Pancreas (tissue), 10 donors: ENCODE measurements at regions of chr11 and their contacts with region 1.

Region 1: DNA sequence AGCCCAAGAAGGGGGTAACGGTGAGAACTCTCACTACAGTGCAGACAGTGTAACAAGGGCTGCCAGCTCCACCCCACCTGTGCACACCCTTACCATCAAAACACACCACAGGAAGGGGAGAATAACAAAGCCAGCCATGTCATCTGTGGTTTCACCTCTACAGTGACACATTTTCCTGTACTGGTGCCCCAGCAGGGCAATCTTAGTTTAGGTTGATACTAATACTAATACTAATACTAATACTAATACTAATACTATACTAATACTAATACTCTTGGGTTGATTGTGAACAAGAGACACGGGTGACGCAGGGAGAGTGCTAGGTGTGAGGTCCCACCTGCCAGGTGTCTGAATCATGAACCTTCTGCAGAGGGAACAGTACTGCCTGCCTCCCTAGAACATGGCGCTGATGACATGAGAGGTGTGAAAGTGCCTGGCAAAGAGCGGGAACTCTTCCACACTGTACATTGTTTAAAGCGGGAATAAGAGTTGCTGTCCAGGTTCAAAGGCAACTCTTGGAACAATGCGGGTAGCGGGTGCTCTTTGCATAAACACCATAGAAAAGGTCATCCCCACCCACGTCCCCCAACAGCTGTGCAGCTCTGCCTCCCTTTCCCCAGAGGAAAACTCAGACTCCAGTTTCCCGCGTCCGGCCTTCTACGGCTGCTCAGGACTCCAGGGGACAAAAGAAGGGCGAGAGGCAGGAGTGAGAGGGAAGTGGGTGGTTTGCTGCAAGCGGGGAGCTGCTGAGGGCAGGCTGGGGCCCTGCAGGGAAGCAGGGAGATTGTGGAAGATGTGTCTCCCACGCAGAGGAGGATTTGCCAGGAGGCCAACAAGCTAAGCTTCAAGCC is 25.0 kb upstream of the TMPRSS4 start:
- DNase-seq: no peak
- ATAC-seq: peak in 1 of 4 donors; percentile 18
- H3K4me3 ChIP-seq: no peak overlapping the region
- H3K27ac ChIP-seq: no peak overlapping the region
- H3K4me1 ChIP-seq: no peaks in the 10 kb centered on the region
- H3K27me3 ChIP-seq: no peaks in the 10 kb centered on the region
- CTCF ChIP-seq: no peak

Region 2: DNA sequence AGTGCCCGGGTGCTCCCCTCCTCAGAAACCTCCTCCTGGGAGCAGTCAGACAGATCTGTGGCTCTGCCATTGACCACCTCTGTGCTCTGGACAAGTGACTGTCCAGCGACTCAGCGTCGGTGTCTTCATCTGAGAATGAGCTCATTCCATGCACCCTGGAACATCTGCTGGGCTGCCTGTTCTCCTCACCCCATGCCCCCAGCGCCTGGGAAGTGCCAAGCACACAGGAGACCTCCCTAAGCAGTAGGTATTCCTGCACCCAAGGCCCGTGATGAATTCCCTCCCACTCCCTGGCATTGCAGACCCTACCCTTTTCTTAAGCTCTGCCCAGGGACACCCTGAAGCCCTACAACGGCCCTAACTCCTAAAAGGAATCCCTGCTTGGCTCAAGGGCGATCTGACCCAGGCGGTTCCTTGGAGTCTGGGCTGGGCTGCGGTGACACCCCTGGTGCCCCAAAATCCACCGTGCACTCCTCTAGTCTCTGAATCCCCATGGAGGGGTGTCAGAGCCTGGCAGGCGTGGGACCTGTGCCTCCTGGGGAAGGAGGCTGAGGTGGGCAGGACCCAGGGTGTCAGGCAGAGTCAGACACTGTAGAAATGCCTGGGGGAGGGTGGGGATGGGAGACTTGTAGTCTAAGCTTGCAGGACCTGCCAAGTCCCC is 632.2 kb before region 1 on chr11:
- intact Hi-C with region 1: loop called in 1 of 3 experiments (anchors 5 kb)
- DNase-seq: peak in 2 of 6 donors; percentile 1 to 42
- ATAC-seq: no peak
- H3K4me3 ChIP-seq: no peak overlapping the region
- H3K27ac ChIP-seq: no peak overlapping the region
- H3K4me1 ChIP-seq: no peaks in the 10 kb centered on the region
- H3K27me3 ChIP-seq: no peaks in the 10 kb centered on the region
- CTCF ChIP-seq: no peak

Region 3: GRCh38 chr11:117479372-117479771 is 572.5 kb before region 1 on chr11:
- intact Hi-C with region 1: no loop called
- DNase-seq: peak in 2 of 6 donors; percentile 22 to 49
- ATAC-seq: peak in 2 of 4 donors; percentile 41 to 53
- H3K4me3 ChIP-seq: no peak overlapping the region
- H3K27ac ChIP-seq: no peak overlapping the region
- H3K4me1 ChIP-seq: no peaks in the 10 kb centered on the region
- H3K27me3 ChIP-seq: no peaks in the 10 kb centered on the region
- CTCF ChIP-seq: no peak

Region 4: DNA sequence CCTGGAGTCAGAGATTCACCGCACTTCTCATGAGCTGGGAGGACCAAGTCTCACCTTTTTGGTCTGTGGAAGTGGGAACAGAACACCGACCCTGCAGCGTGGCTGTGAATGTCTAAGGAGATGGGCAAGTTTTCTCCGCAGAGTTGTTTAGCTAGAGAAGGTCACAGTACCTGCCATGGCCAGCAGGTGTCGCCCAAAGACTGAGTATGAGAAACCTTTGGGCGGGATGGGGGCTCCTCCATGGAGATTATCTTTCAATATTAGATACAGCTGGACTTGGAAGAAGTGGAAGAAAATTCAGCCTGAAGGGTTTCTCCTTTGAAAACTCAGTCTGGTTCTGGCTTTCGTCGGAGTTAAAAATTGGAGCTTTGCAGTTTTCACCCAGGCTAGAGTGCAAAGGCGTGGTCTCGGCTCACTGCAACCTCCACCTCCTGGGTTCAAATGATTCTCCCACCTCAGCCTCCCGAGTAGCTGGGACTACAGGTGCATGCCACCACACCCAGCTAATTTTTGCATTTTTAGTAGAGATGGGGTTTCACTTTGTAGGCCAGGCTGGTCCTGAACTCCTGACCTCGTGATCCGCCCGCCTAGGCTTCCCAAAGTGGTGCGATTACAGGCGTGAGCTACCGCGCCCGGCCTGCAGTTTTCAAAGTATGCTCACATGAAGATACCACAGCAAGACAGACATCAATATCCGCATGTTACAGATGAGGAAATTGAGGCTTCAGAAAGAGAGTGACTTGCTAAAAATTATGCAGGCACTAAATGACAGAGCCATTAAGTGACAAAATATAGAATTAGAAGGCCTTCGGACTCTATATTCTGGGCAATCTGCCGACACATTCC is 244.1 kb before region 1 on chr11:
- intact Hi-C with region 1: loop called in 2 of 3 experiments (anchors 5 kb)
- DNase-seq: peak in 3 of 6 donors; percentile 75 to 93 (median 80)
- ATAC-seq: peak; percentile 50 to 89 (median 80)
- H3K4me3 ChIP-seq: no peak overlapping the region
- H3K27ac ChIP-seq: no peak overlapping the region
- H3K4me1 ChIP-seq: no peaks in the 10 kb centered on the region
- H3K27me3 ChIP-seq: no peaks in the 10 kb centered on the region
- CTCF ChIP-seq: peak; percentile 78 to 87 (median 85)

Region 5: GRCh38 chr11:117843666-117844484 is 208.0 kb before region 1 on chr11:
- intact Hi-C with region 1: loop called in 1 of 3 experiments (anchors 10 kb)
- DNase-seq: peak; percentile 62 to 96 (median 82)
- ATAC-seq: peak; percentile 78 to 91 (median 90)
- H3K4me3 ChIP-seq: no peak overlapping the region
- H3K27ac ChIP-seq: no peak overlapping the region
- H3K4me1 ChIP-seq: no peaks in the 10 kb centered on the region
- H3K27me3 ChIP-seq: no peaks in the 10 kb centered on the region
- CTCF ChIP-seq: peak; percentile 96 to 99 (median 99)

Region 6: GRCh38 chr11:117885777-117886176 is 166.1 kb before region 1 on chr11:
- intact Hi-C with region 1: no loop called
- DNase-seq: peak in 2 of 6 donors; percentile 16 to 28
- ATAC-seq: peak in 3 of 4 donors; percentile 34 to 70 (median 45)
- H3K4me3 ChIP-seq: no peak overlapping the region
- H3K27ac ChIP-seq: peak overlapping the region in 2 of 4 donors; percentile 5
- H3K4me1 ChIP-seq: peaks cover 0 to 4% (median 0%) of the 10 kb centered on the region in 3 donors
- H3K27me3 ChIP-seq: no peaks in the 10 kb centered on the region
- CTCF ChIP-seq: no peak

Region 7: DNA sequence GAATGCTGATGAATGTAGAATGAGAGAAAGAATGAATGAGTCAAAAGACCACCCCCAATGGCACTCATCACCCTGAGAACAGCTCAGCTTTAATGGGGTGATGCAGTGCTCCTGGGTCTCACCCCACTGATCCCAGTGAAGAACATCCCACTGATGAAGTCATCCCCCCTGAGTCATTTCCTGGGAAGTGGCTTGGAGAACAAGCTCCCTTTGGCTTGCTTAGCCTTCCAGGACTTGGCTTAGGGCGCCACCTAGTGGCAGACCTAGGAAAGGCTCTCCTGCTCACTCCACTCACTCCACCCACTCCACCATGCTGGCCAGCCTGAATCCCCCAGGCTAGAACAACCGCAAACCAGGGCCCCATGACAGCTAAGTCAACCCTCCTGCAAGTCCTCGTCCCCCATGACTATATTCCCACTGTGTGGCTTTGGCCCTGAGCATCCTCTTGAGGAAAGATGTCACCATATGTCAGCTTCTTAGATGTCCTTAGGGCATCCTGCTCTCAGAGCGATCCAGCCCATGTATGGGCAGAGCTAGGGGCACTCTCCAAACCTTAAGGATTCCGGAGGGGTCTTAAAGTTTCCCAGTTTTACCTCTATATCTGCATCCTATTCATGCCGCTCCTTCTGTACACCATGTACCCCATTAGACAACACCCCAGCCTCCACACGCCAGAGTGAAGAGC is 104.9 kb before region 1 on chr11:
- intact Hi-C with region 1: loop called in 1 of 3 experiments (anchors 10 kb)
- DNase-seq: peak; percentile 76 to 99 (median 91)
- ATAC-seq: peak; percentile 96 to 99 (median 98)
- H3K4me3 ChIP-seq: no peak overlapping the region
- H3K27ac ChIP-seq: no peak overlapping the region
- H3K4me1 ChIP-seq: no peaks in the 10 kb centered on the region
- H3K27me3 ChIP-seq: no peaks in the 10 kb centered on the region
- CTCF ChIP-seq: peak; percentile 96 to 97 (median 96)

Region 8: DNA sequence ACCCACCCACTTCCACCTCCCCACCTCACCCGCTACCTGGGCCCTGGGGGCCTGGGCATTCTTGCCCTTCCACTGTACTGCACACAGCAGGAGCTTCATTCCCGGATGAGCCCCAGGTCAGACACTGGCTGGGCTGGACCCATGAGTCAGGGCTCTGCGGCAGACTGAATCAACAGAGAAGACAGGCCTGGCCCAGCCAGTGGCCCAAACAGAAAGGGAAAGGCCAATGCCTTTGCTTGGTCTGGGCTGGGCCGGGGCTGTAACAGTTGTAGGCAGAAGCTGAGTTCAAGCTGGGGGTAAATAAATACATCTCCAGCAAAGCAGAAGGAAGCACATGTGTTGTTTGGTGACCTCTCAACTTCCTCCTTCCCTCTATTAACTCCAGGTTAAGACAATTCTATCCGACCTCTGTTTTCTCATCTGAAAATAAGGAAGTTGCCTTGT is 36.7 kb after region 1 on chr11:
- intact Hi-C with region 1: no loop called
- DNase-seq: no peak
- ATAC-seq: peak in 3 of 4 donors; percentile 69 to 84 (median 72)
- H3K4me3 ChIP-seq: no peak overlapping the region
- H3K27ac ChIP-seq: no peak overlapping the region
- H3K4me1 ChIP-seq: no peaks in the 10 kb centered on the region
- H3K27me3 ChIP-seq: no peaks in the 10 kb centered on the region
- CTCF ChIP-seq: no peak

Region 9: GRCh38 chr11:118251858-118252652 is 200.2 kb after region 1 on chr11 and contains the start of gene MPZL3:
- intact Hi-C with region 1: no loop called
- DNase-seq: peak; percentile 75 to 96 (median 91)
- ATAC-seq: peak; percentile 93 to 95 (median 94)
- H3K4me3 ChIP-seq: peak within 1 kb of the TSS; percentile 47 to 92 (median 62)
- H3K27ac ChIP-seq: peak within 1 kb of the TSS; percentile 90 to 99 (median 96)
- H3K4me1 ChIP-seq: peaks cover 0 to 10% (median 6%) of the 10 kb centered on the region in 3 donors
- H3K27me3 ChIP-seq: no peaks in the 10 kb centered on the region
- CTCF ChIP-seq: no peak
- total RNA-seq, gene MPZL3: 4.4 to 8.0 (median 5.6) TPM